Sigmoid colon (tissue), 7 donors: ENCODE measurements at regions of chr12 and their contacts with region 1.

Region 1: GRCh38 chr12:132003846-132004245 is 54.1 kb downstream of the EP400 start:
- DNase-seq: no peak
- H3K4me3 ChIP-seq: no peak overlapping the region
- H3K27ac ChIP-seq: no peak overlapping the region
- H3K4me1 ChIP-seq: no peaks in the 10 kb centered on the region
- H3K27me3 ChIP-seq: no peaks in the 10 kb centered on the region
- CTCF ChIP-seq: no peak
- EP300 ChIP-seq: no peak
- POLR2A ChIP-seq: no peak

Region 2: GRCh38 chr12:131850856-131851559 is 152.8 kb before region 1 on chr12:
- intact Hi-C with region 1: loop called (anchors 1 kb)
- DNase-seq: no peak
- H3K4me3 ChIP-seq: peak overlapping the region in 2 of 4 donors; percentile 19 to 37
- H3K27ac ChIP-seq: no peak overlapping the region
- H3K4me1 ChIP-seq: peaks cover 0 to 9% (median 1%) of the 10 kb centered on the region in 4 donors
- H3K27me3 ChIP-seq: peaks cover 0 to 34% (median 19%) of the 10 kb centered on the region in 3 donors
- CTCF ChIP-seq: peak; percentile 24 to 65 (median 60)
- EP300 ChIP-seq: no peak
- POLR2A ChIP-seq: no peak

Region 3: DNA sequence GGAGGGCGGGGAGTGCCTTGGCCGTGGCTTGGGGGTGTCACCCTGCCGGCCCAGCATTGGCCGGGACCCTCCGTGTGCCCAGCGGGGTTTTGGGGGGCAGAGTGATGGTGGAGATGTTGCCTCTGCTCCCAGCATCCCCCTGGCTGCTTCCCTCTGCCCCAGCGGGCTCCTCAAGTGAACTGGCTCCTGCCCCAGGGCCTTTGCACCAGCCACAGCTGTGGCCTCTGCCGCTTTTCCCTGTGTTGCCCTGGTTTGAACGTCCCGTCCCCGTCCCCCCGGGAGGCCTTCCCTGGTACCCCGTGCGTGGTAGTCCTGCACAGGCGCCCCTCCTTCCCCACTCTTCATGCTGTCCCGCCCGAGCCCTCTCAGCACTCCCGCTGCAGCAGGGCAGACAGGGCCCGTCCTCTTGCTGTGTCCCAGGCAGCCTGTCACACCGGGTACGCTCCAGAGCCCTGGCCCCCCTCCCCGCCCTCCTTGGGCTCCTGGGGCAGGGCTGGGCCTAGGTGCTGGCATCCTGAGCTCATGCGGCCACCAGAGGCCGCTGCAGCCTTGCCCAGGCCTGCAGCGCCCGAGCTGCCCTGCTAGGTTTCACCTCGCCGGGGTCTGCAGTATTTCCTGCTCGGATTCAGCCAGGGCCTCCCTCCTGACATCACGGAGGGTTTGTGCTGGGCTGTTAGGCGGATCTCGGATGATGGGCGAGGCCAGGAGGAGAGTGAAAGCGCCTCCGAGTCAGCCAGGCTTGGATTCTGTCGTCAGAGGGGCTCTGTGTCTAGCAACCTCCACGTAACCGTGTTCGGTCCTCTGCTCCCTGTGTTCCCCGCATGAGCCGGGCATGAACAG is 149.9 kb after region 1 on chr12:
- intact Hi-C with region 1: no loop called
- DNase-seq: peak; percentile 82
- H3K4me3 ChIP-seq: peak overlapping the region in 3 of 4 donors; percentile 31 to 34 (median 33)
- H3K27ac ChIP-seq: no peak overlapping the region
- H3K4me1 ChIP-seq: peaks cover 0 to 11% (median 7%) of the 10 kb centered on the region in 4 donors
- H3K27me3 ChIP-seq: no peaks in the 10 kb centered on the region
- CTCF ChIP-seq: peak; percentile 79 to 94 (median 89)
- EP300 ChIP-seq: no peak
- POLR2A ChIP-seq: no peak